Mucosa of descending colon (tissue), 3 donors: ENCODE measurements at regions of chr2 and their contacts with region 1.

Region 1: GRCh38 chr2:156892467-156893281 is 364.8 kb upstream of the GALNT5 start:
- DNase-seq: peak in 1 of 3 donors; percentile 19
- ATAC-seq: peak; percentile 95
- H3K4me3 ChIP-seq: no peak overlapping the region
- H3K4me1 ChIP-seq: no peaks in the 10 kb centered on the region
- CTCF ChIP-seq: peak; percentile 11

Region 2: GRCh38 chr2:156589381-156590079 is 303.1 kb before region 1 on chr2:
- intact Hi-C with region 1: loop called in 1 of 2 experiments (anchors 5 kb)
- DNase-seq: peak in 1 of 3 donors; percentile 20
- ATAC-seq: peak; percentile 49
- H3K4me3 ChIP-seq: no peak overlapping the region
- H3K4me1 ChIP-seq: no peaks in the 10 kb centered on the region
- CTCF ChIP-seq: no peak

Region 3: GRCh38 chr2:157194097-157194688 is 301.5 kb after region 1 on chr2:
- intact Hi-C with region 1: loop called in 1 of 2 experiments (anchors 10 kb)
- DNase-seq: peak in 1 of 3 donors; percentile 49
- ATAC-seq: peak; percentile 68
- H3K4me3 ChIP-seq: no peak overlapping the region
- H3K4me1 ChIP-seq: no peaks in the 10 kb centered on the region
- CTCF ChIP-seq: peak; percentile 27